Activated CD4-positive, alpha-beta T cell treated with anti-CD3 and anti-CD28 coated beads, Interleukin-2, amount 10 ng/mL, durations not matched to agents 24 days and 14 days (primary cell): ENCODE measurements at regions of chr20 and their contacts with region 1.

Region 1: DNA sequence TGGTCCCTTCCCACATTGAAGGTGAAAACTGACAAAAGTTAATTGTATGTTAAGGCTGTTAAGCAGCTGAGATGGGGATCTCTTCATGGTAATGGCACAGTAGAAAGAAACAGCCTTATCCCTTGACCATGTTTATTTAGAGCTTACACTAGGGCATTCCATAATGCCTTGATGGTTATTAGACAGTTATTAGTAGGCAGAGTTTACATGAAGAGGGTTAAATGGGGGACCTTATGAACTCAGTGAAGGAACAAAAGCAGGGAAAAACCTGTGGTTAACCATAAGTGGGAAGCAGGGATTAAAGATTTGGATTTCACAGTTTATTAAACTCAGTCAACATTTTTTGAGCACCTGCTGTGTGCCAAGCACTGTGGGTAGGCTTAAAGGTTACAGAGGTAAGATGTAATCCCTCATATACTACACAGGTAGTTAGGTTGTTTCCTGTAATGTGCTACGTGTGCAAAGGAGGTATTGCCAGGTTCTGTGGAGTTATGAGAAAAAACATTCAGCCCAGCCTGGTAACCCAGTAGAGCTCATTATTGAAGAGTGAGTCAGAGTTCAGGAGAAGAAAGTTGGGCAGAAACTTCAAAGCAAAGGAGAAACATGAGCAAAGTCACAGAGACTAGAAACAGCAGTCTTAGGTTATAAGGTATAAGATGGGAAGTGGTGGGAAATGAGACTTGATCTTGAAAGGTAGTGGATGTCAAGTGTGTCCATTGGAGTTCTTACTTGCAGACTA is 32.3 kb upstream of the GNRH2 start:
- DNase-seq: peak; percentile 72
- H3K4me3 Mint-ChIP-seq: peak overlapping the region; percentile 22
- H3K27ac Mint-ChIP-seq: peak overlapping the region; percentile 86
- H3K4me1 Mint-ChIP-seq: peaks cover 50% of the 10 kb centered on the region
- H3K27me3 Mint-ChIP-seq: no peaks in the 10 kb centered on the region

Region 2: GRCh38 chr20:2065099-2065498 is 946.1 kb before region 1 on chr20:
- intact Hi-C with region 1: no loop called
- DNase-seq: no peak
- H3K4me3 Mint-ChIP-seq: no peak overlapping the region
- H3K27ac Mint-ChIP-seq: no peak overlapping the region
- H3K4me1 Mint-ChIP-seq: no peaks in the 10 kb centered on the region
- H3K27me3 Mint-ChIP-seq: peaks cover 16% of the 10 kb centered on the region

Region 3: GRCh38 chr20:2914160-2914559 is 97.0 kb before region 1 on chr20:
- intact Hi-C with region 1: loop called (anchors 1 kb)
- DNase-seq: no peak
- H3K4me3 Mint-ChIP-seq: no peak overlapping the region
- H3K27ac Mint-ChIP-seq: no peak overlapping the region
- H3K4me1 Mint-ChIP-seq: peaks cover 6% of the 10 kb centered on the region
- H3K27me3 Mint-ChIP-seq: no peaks in the 10 kb centered on the region

Region 4: GRCh38 chr20:2984956-2985661 is 26.0 kb before region 1 on chr20:
- intact Hi-C with region 1: loop called (anchors 1 kb)
- DNase-seq: no peak
- H3K4me3 Mint-ChIP-seq: no peak overlapping the region
- H3K27ac Mint-ChIP-seq: no peak overlapping the region
- H3K4me1 Mint-ChIP-seq: peaks cover 37% of the 10 kb centered on the region
- H3K27me3 Mint-ChIP-seq: no peaks in the 10 kb centered on the region

Region 5: DNA sequence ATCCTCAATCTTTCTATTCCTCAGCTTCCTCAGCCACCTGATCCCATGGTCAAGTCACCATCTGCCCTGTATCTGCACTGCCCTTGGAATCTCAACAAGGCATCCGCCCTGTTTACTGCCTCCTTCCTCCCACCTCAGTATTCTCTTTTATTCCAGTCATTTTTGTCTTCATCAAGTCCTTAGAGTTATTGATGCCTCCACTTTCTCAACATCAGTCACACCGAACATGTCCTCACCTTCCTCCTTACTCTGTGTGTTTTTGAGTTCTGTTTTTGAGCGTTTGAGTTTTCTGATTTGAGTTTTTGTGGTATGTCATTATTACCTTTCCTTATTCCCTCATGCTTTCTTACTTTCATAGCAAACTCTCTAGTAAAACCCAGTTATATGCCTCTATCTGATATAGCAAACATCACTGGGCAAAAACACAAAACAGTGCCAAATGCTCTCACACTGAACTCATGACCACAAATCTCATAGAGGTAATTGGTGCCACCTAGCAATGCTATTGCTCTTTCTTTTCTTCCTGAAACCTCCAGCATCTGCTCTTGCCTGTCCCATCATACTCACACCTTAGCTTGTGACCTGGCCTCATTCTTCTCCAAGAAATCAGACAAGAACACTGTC is 20.5 kb after region 1 on chr20:
- intact Hi-C with region 1: loop called (anchors 1 kb)
- DNase-seq: no peak
- H3K4me3 Mint-ChIP-seq: no peak overlapping the region
- H3K27ac Mint-ChIP-seq: no peak overlapping the region
- H3K4me1 Mint-ChIP-seq: peaks cover 6% of the 10 kb centered on the region
- H3K27me3 Mint-ChIP-seq: no peaks in the 10 kb centered on the region

Region 6: GRCh38 chr20:3045816-3046676 is 34.9 kb after region 1 on chr20 and contains the start of gene MRPS26:
- intact Hi-C with region 1: loop called (anchors 1 kb)
- DNase-seq: peak; percentile 96
- H3K4me3 Mint-ChIP-seq: peak within 1 kb of the TSS; percentile 93
- H3K27ac Mint-ChIP-seq: peak within 1 kb of the TSS; percentile 87
- H3K4me1 Mint-ChIP-seq: peaks cover 16% of the 10 kb centered on the region
- H3K27me3 Mint-ChIP-seq: no peaks in the 10 kb centered on the region
- total RNA-seq, gene MRPS26: 123 and 130 TPM in 2 replicates

Region 7: DNA sequence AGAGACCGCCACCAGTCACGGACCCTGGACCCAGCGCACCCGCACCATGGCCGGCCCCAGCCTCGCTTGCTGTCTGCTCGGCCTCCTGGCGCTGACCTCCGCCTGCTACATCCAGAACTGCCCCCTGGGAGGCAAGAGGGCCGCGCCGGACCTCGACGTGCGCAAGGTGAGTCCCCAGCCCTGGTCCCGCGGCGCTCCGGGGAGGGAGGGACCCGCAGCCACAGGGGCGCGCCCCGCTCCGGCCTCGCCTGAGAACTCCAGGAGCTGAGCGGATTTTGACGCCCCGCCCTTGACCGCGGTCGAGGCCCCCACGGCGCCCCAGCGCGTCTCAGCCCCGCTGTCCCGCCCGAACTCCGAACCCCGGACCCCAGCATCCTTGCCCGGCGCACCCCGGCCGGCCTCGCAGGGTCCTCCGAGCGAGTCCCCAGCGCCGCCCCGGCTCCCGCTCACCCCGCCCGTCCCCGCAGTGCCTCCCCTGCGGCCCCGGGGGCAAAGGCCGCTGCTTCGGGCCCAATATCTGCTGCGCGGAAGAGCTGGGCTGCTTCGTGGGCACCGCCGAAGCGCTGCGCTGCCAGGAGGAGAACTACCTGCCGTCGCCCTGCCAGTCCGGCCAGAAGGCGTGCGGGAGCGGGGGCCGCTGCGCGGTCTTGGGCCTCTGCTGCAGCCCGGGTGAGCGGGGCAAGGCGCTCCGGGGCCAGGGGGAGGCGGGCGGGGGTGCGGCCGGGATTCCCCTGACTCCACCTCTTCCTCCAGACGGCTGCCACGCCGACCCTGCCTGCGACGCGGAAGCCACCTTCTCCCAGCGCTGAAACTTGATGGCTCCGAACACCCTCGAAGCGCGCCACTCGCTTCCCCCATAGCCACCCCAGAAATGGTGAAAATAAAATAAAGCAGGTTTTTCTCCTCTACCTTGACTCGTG is 60.7 kb after region 1 on chr20 and contains the start of gene OXT:
- intact Hi-C with region 1: no loop called
- DNase-seq: peak; percentile 88
- H3K4me3 Mint-ChIP-seq: peak within 1 kb of the TSS; percentile 73
- H3K27ac Mint-ChIP-seq: peak within 1 kb of the TSS; percentile 68
- H3K4me1 Mint-ChIP-seq: peaks cover 24% of the 10 kb centered on the region
- H3K27me3 Mint-ChIP-seq: peaks cover 4% of the 10 kb centered on the region
- total RNA-seq, gene OXT: 0.73 TPM in 1 of 2 replicates, not detected in the other